ENCODE measurements at regions of chr12 and their contacts with region 1.

Region 1: DNA sequence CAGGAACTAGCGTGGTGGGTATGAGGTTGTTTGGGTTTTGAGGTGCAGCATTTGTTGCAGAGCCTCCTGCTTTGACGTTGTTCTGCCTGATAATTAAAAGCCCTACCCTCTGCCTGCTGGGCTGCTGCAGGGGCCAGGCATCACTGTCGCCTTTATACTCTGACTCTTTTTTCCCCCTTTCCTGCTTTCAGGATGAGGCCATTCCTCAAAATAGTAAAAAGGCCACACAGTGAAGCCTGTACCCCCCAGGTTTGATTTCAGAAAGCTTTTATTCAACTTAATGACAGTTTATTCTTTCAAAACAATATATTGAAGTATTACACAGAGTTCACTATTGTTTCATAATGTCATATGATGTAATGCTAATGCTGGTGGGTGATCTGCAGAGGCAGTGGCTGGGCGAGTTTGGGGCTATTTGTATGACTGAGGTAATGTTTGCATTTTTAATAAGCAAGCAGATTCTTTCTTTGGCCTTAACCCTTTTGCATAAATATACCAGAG is 9.1 kb downstream of the BORCS5 start:
- DNase-seq: no peak
- H3K4me3 ChIP-seq: no peak overlapping the region
- H3K27ac ChIP-seq: 0 out of 2 replicates have a peak overlapping the region, but pooled peaks have one; percentile 12
- H3K4me1 ChIP-seq: peaks cover 9% of the 10 kb centered on the region; the same call in 1 of the 2 replicates
- H3K27me3 ChIP-seq: no peaks in the 10 kb centered on the region
- CTCF ChIP-seq: no peak

Region 2: GRCh38 chr12:12349711-12350665 is 16.0 kb before region 1 on chr12 and contains the start of gene MANSC1:
- CTCF ChIA-PET with region 1: no interaction called
- POLR2A ChIA-PET with region 1: interaction called, 10 read pairs
- intact Hi-C with region 1: no loop called
- DNase-seq: peak; percentile 60 to 71
- H3K4me3 ChIP-seq: peak within 1 kb of the TSS; percentile 85
- H3K27ac ChIP-seq: peak within 1 kb of the TSS; percentile 92
- H3K4me1 ChIP-seq: peaks cover 37% of the 10 kb centered on the region
- H3K27me3 ChIP-seq: no peaks in the 10 kb centered on the region
- CTCF ChIP-seq: peak; percentile 45; the same call in 1 of the 2 replicates
- total RNA-seq, gene MANSC1: 25.5 and 32.0 TPM in 2 replicates

Region 3: GRCh38 chr12:12555656-12556055 is 189.7 kb after region 1 on chr12:
- CTCF ChIA-PET with region 1: interaction called, 4 read pairs
- POLR2A ChIA-PET with region 1: interaction called, 19 read pairs
- intact Hi-C with region 1: no loop called
- DNase-seq: no peak
- H3K4me3 ChIP-seq: no peak overlapping the region
- H3K27ac ChIP-seq: no peak overlapping the region
- H3K4me1 ChIP-seq: peaks cover 15% of the 10 kb centered on the region
- H3K27me3 ChIP-seq: no peaks in the 10 kb centered on the region
- CTCF ChIP-seq: no peak

Region 4: DNA sequence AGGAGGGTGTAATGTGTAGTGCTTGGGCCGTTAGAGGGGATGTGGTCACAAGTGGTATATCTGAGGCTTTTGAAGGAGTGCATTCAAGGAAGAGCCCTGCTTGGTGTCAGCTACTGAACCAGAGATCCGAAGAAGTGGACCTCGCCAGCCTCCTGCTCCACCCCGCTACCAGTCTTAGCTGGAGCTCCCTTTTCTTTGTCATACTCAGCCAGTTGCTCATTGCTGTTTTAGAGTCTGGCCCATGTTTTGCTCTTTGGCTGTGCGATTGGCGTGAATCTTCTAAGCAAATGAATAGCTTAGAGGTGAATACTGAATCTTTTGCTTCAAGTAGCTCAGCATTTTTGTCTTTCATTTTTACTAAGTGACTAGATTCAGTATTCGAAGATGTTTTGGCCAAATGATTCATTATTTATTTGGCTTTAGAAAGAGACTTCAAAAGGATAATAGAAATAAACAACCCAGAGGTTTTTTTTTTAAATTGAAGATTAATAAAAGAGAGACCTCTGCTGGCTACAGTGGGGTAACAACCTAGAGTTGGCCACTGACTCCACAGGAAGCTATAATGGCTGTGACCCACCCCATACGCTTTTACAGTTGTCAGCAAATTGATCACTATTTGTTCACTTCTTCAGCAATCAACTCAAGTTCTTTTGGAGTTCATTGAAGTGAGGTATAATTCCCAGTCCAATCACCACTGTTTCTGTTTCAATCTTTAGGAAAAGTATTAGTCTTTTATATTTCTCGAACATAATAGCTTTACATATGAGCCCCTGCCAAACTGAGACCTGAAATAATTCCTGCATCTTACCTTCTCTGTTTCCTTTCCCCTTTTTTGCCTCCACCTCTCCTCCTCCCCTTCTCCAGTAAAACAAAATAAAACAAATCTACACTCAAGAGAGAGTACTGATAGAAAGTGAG is 371.0 kb after region 1 on chr12:
- CTCF ChIA-PET with region 1: no interaction called
- POLR2A ChIA-PET with region 1: no interaction called
- intact Hi-C with region 1: no loop called
- DNase-seq: no peak
- H3K4me3 ChIP-seq: no peak overlapping the region
- H3K27ac ChIP-seq: no peak overlapping the region
- H3K4me1 ChIP-seq: peaks cover 16% of the 10 kb centered on the region; the same call in 1 of the 2 replicates
- H3K27me3 ChIP-seq: no peaks in the 10 kb centered on the region
- CTCF ChIP-seq: peak; percentile 70

Measured in PC-9 (cell line).